SK-N-SH (cell line): ENCODE measurements at regions of chr18 and their contacts with region 1.

Region 1: GRCh38 chr18:49858309-49859020 is 45.1 kb upstream of the ACAA2 start:
- DNase-seq: peak; percentile 83
- H3K4me3 ChIP-seq: peak overlapping the region in 1 of 2 experiments; percentile 30; a peak in 1 of 4 replicates
- H3K27ac ChIP-seq: no peak overlapping the region
- H3K4me1 ChIP-seq: peaks cover 0 to 3% of the 10 kb centered on the region in 2 experiments; a peak in 2 of 4 replicates
- H3K27me3 ChIP-seq: no peaks in the 10 kb centered on the region
- CTCF ChIP-seq: peak; percentile 97
- EP300 ChIP-seq: no peak
- RAD21 ChIP-seq: peak; percentile 97

Region 2: GRCh38 chr18:49519101-49519971 is 339.1 kb before region 1 on chr18:
- CTCF ChIA-PET with region 1: interaction called, 254 read pairs
- POLR2A ChIA-PET with region 1: no interaction called
- DNase-seq: no peak
- H3K4me3 ChIP-seq: no peak overlapping the region
- H3K27ac ChIP-seq: no peak overlapping the region
- H3K4me1 ChIP-seq: peaks cover 0 to 9% of the 10 kb centered on the region in 2 experiments; a peak in 1 of 4 replicates
- H3K27me3 ChIP-seq: no peaks in the 10 kb centered on the region
- CTCF ChIP-seq: no peak
- EP300 ChIP-seq: no peak
- RAD21 ChIP-seq: no peak

Region 3: GRCh38 chr18:49524349-49524748 is 334.1 kb before region 1 on chr18:
- CTCF ChIA-PET with region 1: interaction called, 10 read pairs
- POLR2A ChIA-PET with region 1: no interaction called
- DNase-seq: no peak
- H3K4me3 ChIP-seq: no peak overlapping the region
- H3K27ac ChIP-seq: no peak overlapping the region
- H3K4me1 ChIP-seq: peaks cover 0 to 19% of the 10 kb centered on the region in 2 experiments; a peak in 1 of 4 replicates
- H3K27me3 ChIP-seq: no peaks in the 10 kb centered on the region
- CTCF ChIP-seq: no peak
- EP300 ChIP-seq: no peak
- RAD21 ChIP-seq: no peak

Region 4: GRCh38 chr18:49561289-49562193 is 296.9 kb before region 1 on chr18 and contains the start of gene LIPG:
- CTCF ChIA-PET with region 1: interaction called, 140 read pairs
- POLR2A ChIA-PET with region 1: no interaction called
- DNase-seq: peak; percentile 66
- H3K4me3 ChIP-seq: peak within 1 kb of the TSS; percentile 47 to 70
- H3K27ac ChIP-seq: peak within 1 kb of the TSS in 1 of 2 experiments; percentile 5; a peak in 1 of 4 replicates
- H3K4me1 ChIP-seq: peaks cover 23 to 33% of the 10 kb centered on the region in 2 experiments; a peak in 3 of 4 replicates
- H3K27me3 ChIP-seq: no peaks in the 10 kb centered on the region
- CTCF ChIP-seq: no peak
- EP300 ChIP-seq: no peak
- RAD21 ChIP-seq: no peak
- polyA plus RNA-seq, gene LIPG: 3.2 and 4.4 TPM in 2 replicates

Region 5: DNA sequence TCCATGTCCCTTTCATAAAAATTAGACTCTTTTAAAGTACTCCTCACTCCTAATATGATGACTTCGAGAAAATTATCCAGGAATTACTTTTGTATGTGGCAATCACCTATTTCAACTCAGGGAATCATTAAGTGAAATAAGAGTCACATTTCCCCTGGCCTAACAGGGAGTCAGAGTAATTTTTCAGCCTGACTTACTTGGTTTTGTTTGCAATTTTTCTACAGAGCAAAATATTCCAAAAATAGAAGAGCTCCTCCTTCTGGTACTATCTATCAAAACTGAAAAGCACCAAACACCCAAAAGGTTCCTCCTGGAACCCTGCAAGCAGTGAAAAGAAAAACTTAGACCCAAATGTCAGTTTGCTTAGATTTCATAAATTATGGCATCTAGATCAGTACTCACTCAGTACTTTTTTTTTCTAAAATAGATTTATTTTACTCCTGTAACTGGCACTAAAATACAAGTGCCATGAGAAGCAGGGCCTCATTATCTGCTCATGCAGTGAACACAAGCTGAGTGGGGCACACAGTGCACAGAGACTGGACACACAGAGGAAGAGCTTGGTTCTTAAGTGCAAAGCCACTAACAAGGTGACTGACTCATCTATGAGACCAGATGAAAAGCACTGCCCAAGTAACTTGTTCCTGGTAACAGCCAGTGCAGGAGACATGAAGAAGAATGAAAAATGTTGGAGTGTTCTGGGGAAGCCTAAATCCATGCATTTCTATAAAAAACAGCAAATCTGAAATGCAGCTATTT is 73.9 kb before region 1 on chr18:
- CTCF ChIA-PET with region 1: interaction called, 11 read pairs
- POLR2A ChIA-PET with region 1: no interaction called
- DNase-seq: no peak
- H3K4me3 ChIP-seq: no peak overlapping the region
- H3K27ac ChIP-seq: peak overlapping the region in 1 of 2 experiments; percentile 40; a peak in 1 of 4 replicates
- H3K4me1 ChIP-seq: peaks cover 0 to 6% of the 10 kb centered on the region in 2 experiments; a peak in 2 of 4 replicates
- H3K27me3 ChIP-seq: no peaks in the 10 kb centered on the region
- CTCF ChIP-seq: peak; percentile 58
- EP300 ChIP-seq: no peak
- RAD21 ChIP-seq: peak; percentile 31; the same call in 1 of the 2 replicates

Region 6: GRCh38 chr18:49839012-49839411 is 19.5 kb before region 1 on chr18:
- CTCF ChIA-PET with region 1: interaction called, 110 read pairs
- POLR2A ChIA-PET with region 1: no interaction called
- DNase-seq: no peak
- H3K4me3 ChIP-seq: no peak overlapping the region
- H3K27ac ChIP-seq: no peak overlapping the region
- H3K4me1 ChIP-seq: peaks cover 0 to 3% of the 10 kb centered on the region in 2 experiments; a peak in 1 of 4 replicates
- H3K27me3 ChIP-seq: no peaks in the 10 kb centered on the region
- CTCF ChIP-seq: no peak
- EP300 ChIP-seq: no peak
- RAD21 ChIP-seq: no peak

Region 7: GRCh38 chr18:49874238-49874637 is 15.8 kb after region 1 on chr18:
- CTCF ChIA-PET with region 1: interaction called, 21 read pairs
- POLR2A ChIA-PET with region 1: no interaction called
- DNase-seq: no peak
- H3K4me3 ChIP-seq: no peak overlapping the region
- H3K27ac ChIP-seq: no peak overlapping the region
- H3K4me1 ChIP-seq: peaks cover 0 to 7% of the 10 kb centered on the region in 2 experiments; a peak in 1 of 4 replicates
- H3K27me3 ChIP-seq: peaks cover 4% of the 10 kb centered on the region; the same call in 1 of the 2 replicates
- CTCF ChIP-seq: no peak
- EP300 ChIP-seq: no peak
- RAD21 ChIP-seq: no peak